CD4-positive, alpha-beta memory T cell (primary cell): ENCODE measurements at regions of chr12 and their contacts with region 1.

Region 1: DNA sequence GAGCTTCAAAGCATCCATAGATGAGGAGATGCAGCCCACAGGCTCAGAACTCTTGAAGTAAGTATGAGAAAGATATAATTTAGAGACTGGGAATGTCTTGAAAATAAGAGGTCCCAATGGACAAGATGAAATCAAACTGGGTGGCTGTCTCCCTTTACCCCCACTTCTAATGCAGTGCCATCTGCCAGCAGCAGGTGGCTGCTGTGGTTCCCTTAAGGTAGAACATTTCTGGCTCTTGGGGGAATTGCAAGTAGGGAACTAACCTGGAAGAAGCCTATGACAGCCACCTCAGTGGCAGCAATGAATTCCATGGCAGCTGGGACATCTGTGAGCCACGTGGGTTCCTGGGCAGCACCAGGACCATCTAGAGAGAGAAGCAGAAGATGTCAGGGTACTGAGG is 648 bp downstream of the ERP27 start:
- DNase-seq: peak in 1 of 5 donors; percentile 45
- H3K4me3 ChIP-seq: no peak overlapping the region
- H3K4me3 Mint-ChIP-seq: peak overlapping the region in 3 of 8 donors; percentile 7 to 20 (median 13)
- H3K27ac ChIP-seq: no peak overlapping the region
- H3K27ac Mint-ChIP-seq: peak overlapping the region; percentile 6 to 82 (median 65)
- H3K4me1 ChIP-seq: peaks cover 24% of the 10 kb centered on the region
- H3K4me1 Mint-ChIP-seq: peaks cover 33 to 59% (median 48%) of the 10 kb centered on the region in 4 donors
- H3K27me3 ChIP-seq: no peaks in the 10 kb centered on the region
- H3K27me3 Mint-ChIP-seq: no peaks in the 10 kb centered on the region

Region 2: GRCh38 chr12:14514154-14514842 is 423.4 kb before region 1 on chr12:
- CTCF ChIA-PET with region 1: no interaction called
- POLR2A ChIA-PET with region 1: no interaction called
- intact Hi-C with region 1: no loop called
- DNase-seq: no peak
- H3K4me3 ChIP-seq: no peak overlapping the region
- H3K4me3 Mint-ChIP-seq: no peak overlapping the region
- H3K27ac ChIP-seq: no peak overlapping the region
- H3K27ac Mint-ChIP-seq: no peak overlapping the region
- H3K4me1 ChIP-seq: no peaks in the 10 kb centered on the region
- H3K4me1 Mint-ChIP-seq: peaks cover 0 to 2% (median 0%) of the 10 kb centered on the region in 4 donors
- H3K27me3 ChIP-seq: no peaks in the 10 kb centered on the region
- H3K27me3 Mint-ChIP-seq: peaks cover 4 to 5% of the 10 kb centered on the region in 2 donors

Region 3: GRCh38 chr12:14723763-14724162 is 213.9 kb before region 1 on chr12:
- CTCF ChIA-PET with region 1: no interaction called
- POLR2A ChIA-PET with region 1: no interaction called
- intact Hi-C with region 1: loop called (anchors 10 kb)
- DNase-seq: peak; percentile 49 to 66 (median 62)
- H3K4me3 ChIP-seq: no peak overlapping the region
- H3K4me3 Mint-ChIP-seq: no peak overlapping the region
- H3K27ac ChIP-seq: no peak overlapping the region
- H3K27ac Mint-ChIP-seq: peak overlapping the region in 1 of 7 donors; percentile 15
- H3K4me1 ChIP-seq: no peaks in the 10 kb centered on the region
- H3K4me1 Mint-ChIP-seq: peaks cover 0 to 3% (median 1%) of the 10 kb centered on the region in 4 donors
- H3K27me3 ChIP-seq: no peaks in the 10 kb centered on the region
- H3K27me3 Mint-ChIP-seq: peaks cover 5 to 6% of the 10 kb centered on the region in 2 donors

Region 4: DNA sequence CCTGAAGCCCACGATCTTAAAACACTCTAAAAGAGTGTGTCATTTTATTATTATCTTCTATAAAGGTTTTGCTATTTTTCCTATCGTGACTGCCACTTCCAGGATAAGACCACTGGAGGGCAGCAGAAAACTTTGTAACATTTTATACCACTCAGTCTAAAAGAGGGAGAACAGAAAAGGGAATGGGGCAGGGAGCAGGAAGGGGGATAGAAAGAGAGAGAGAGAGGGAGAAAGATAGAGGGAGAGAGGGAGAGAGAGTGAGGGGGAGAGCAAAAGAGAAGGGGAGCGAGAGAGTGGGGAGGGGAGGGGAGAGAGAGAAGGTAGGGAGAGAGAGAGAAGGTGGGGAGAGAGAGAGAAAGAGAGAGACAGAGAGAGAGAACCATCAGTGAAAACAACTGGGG is 92.3 kb before region 1 on chr12:
- CTCF ChIA-PET with region 1: interaction called, 37 read pairs
- POLR2A ChIA-PET with region 1: no interaction called
- intact Hi-C with region 1: loop called (anchors 2 kb)
- DNase-seq: peak in 4 of 5 donors; percentile 50 to 59 (median 56)
- H3K4me3 ChIP-seq: no peak overlapping the region
- H3K4me3 Mint-ChIP-seq: peak overlapping the region in 1 of 8 donors; percentile 11
- H3K27ac ChIP-seq: no peak overlapping the region
- H3K27ac Mint-ChIP-seq: no peak overlapping the region
- H3K4me1 ChIP-seq: peaks cover 3% of the 10 kb centered on the region
- H3K4me1 Mint-ChIP-seq: peaks cover 0 to 5% (median 1%) of the 10 kb centered on the region in 4 donors
- H3K27me3 ChIP-seq: no peaks in the 10 kb centered on the region
- H3K27me3 Mint-ChIP-seq: no peaks in the 10 kb centered on the region

Region 5: GRCh38 chr12:14920475-14921126 is 17.1 kb before region 1 on chr12:
- CTCF ChIA-PET with region 1: interaction called, 18 read pairs
- POLR2A ChIA-PET with region 1: interaction called, 6 read pairs
- intact Hi-C with region 1: loop called (anchors 2 kb)
- DNase-seq: no peak
- H3K4me3 ChIP-seq: no peak overlapping the region
- H3K4me3 Mint-ChIP-seq: peak overlapping the region in 1 of 8 donors; percentile 27
- H3K27ac ChIP-seq: no peak overlapping the region
- H3K27ac Mint-ChIP-seq: peak overlapping the region; percentile 19 to 80 (median 78)
- H3K4me1 ChIP-seq: peaks cover 15% of the 10 kb centered on the region
- H3K4me1 Mint-ChIP-seq: peaks cover 11 to 34% (median 16%) of the 10 kb centered on the region in 4 donors
- H3K27me3 ChIP-seq: no peaks in the 10 kb centered on the region
- H3K27me3 Mint-ChIP-seq: no peaks in the 10 kb centered on the region

Region 6: GRCh38 chr12:14948672-14949071 is 11.0 kb after region 1 on chr12:
- CTCF ChIA-PET with region 1: interaction called, 44 read pairs
- POLR2A ChIA-PET with region 1: interaction called, 33 read pairs
- intact Hi-C with region 1: no loop called
- DNase-seq: peak; percentile 76 to 86 (median 83)
- H3K4me3 ChIP-seq: peak overlapping the region; percentile 20 to 52
- H3K4me3 Mint-ChIP-seq: peak overlapping the region; percentile 73 to 93 (median 84)
- H3K27ac ChIP-seq: peak overlapping the region; percentile 92
- H3K27ac Mint-ChIP-seq: peak overlapping the region; percentile 94 to 100 (median 97)
- H3K4me1 ChIP-seq: peaks cover 91% of the 10 kb centered on the region
- H3K4me1 Mint-ChIP-seq: peaks cover 63 to 92% (median 85%) of the 10 kb centered on the region in 4 donors
- H3K27me3 ChIP-seq: no peaks in the 10 kb centered on the region
- H3K27me3 Mint-ChIP-seq: no peaks in the 10 kb centered on the region

Region 7: GRCh38 chr12:14981049-14981448 is 43.4 kb after region 1 on chr12:
- CTCF ChIA-PET with region 1: interaction called, 18 read pairs
- POLR2A ChIA-PET with region 1: interaction called, 6 read pairs
- intact Hi-C with region 1: no loop called
- DNase-seq: no peak
- H3K4me3 ChIP-seq: no peak overlapping the region
- H3K4me3 Mint-ChIP-seq: peak overlapping the region in 1 of 8 donors; percentile 11
- H3K27ac ChIP-seq: no peak overlapping the region
- H3K27ac Mint-ChIP-seq: peak overlapping the region in 3 of 7 donors; percentile 34 to 66 (median 36)
- H3K4me1 ChIP-seq: peaks cover 38% of the 10 kb centered on the region
- H3K4me1 Mint-ChIP-seq: peaks cover 39 to 57% (median 48%) of the 10 kb centered on the region in 4 donors
- H3K27me3 ChIP-seq: no peaks in the 10 kb centered on the region
- H3K27me3 Mint-ChIP-seq: no peaks in the 10 kb centered on the region

Region 8: DNA sequence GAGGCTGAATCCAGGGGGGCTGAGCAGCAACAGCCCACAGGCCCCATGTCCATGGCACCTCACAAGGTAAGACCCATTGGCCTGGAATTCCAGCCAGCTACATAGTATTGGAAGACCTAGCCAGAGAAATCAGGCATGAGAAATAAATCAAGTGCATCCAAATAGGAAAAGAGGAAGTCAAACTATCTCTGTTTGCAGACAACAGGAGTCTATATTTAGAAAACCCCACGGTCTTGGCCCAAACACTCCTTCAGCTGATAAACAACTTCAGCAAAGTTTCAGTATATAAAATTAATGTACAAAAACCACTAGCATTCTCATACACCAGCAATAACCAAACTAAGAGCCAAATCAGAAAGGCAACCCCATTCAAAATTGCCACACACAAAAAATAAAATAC is 52.1 kb after region 1 on chr12:
- CTCF ChIA-PET with region 1: interaction called, 91 read pairs
- POLR2A ChIA-PET with region 1: interaction called, 6 read pairs
- intact Hi-C with region 1: loop called (anchors 1 kb)
- DNase-seq: no peak
- H3K4me3 ChIP-seq: no peak overlapping the region
- H3K4me3 Mint-ChIP-seq: no peak overlapping the region
- H3K27ac ChIP-seq: no peak overlapping the region
- H3K27ac Mint-ChIP-seq: no peak overlapping the region
- H3K4me1 ChIP-seq: peaks cover 16% of the 10 kb centered on the region
- H3K4me1 Mint-ChIP-seq: peaks cover 17 to 22% (median 20%) of the 10 kb centered on the region in 4 donors
- H3K27me3 ChIP-seq: no peaks in the 10 kb centered on the region
- H3K27me3 Mint-ChIP-seq: no peaks in the 10 kb centered on the region